H1 (cell line): ENCODE measurements at regions of chr2 and their contacts with region 1.

Region 1: DNA sequence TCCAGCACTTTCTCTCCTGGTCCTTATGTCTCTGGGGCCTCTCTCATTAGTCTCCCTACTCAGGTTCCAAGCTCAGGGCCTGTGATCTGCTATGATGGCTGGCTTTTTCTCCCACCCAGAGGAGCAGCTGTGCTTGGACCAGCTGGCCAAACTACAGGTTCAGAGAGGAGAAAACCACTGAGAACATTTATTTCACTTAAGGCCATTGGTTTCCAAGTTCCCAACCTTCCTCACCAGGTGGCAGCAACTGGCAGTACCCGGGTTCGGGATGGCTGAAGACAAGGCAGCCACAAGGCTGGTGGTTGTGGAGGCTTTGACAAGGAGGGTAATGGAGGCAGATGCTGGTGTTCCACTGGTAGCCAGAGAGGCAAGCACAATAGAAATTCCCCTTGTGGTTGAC is 29.9 kb upstream of the SELENOI start:
- DNase-seq: no peak
- H3K4me3 ChIP-seq: no peak overlapping the region
- H3K27ac ChIP-seq: no peak overlapping the region
- H3K4me1 ChIP-seq: peaks cover 0 to 7% (median 3%) of the 10 kb centered on the region in 4 experiments; a peak in 4 of 7 replicates
- H3K27me3 ChIP-seq: no peaks in the 10 kb centered on the region
- CTCF ChIP-seq: peak in 2 of 3 experiments; percentile 50 to 56; a peak in 3 of 4 replicates
- EP300 ChIP-seq: no peak
- POLR2A ChIP-seq: no peak
- RAD21 ChIP-seq: peak; percentile 50 to 66

Region 2: GRCh38 chr2:26235085-26235484 is 81.0 kb before region 1 on chr2:
- CTCF ChIA-PET with region 1: interaction called, 14 read pairs
- POLR2A ChIA-PET with region 1: no interaction called
- DNase-seq: no peak
- H3K4me3 ChIP-seq: no peak overlapping the region
- H3K27ac ChIP-seq: no peak overlapping the region
- H3K4me1 ChIP-seq: no peaks in the 10 kb centered on the region
- H3K27me3 ChIP-seq: no peaks in the 10 kb centered on the region
- CTCF ChIP-seq: peak in 2 of 3 experiments; percentile 22; a peak in 2 of 4 replicates
- EP300 ChIP-seq: no peak
- POLR2A ChIP-seq: no peak
- RAD21 ChIP-seq: peak; percentile 49 to 51

Region 3: GRCh38 chr2:26276488-26277227 is 39.4 kb before region 1 on chr2:
- CTCF ChIA-PET with region 1: interaction called, 11 read pairs
- POLR2A ChIA-PET with region 1: no interaction called
- DNase-seq: no peak
- H3K4me3 ChIP-seq: no peak overlapping the region
- H3K27ac ChIP-seq: no peak overlapping the region
- H3K4me1 ChIP-seq: no peaks in the 10 kb centered on the region
- H3K27me3 ChIP-seq: peaks cover 0 to 1% (median 0%) of the 10 kb centered on the region in 4 experiments; a peak in 1 of 7 replicates
- CTCF ChIP-seq: no peak
- EP300 ChIP-seq: no peak
- POLR2A ChIP-seq: no peak
- RAD21 ChIP-seq: no peak

Region 4: GRCh38 chr2:26299471-26300101 is 16.5 kb before region 1 on chr2:
- CTCF ChIA-PET with region 1: interaction called, 10 read pairs
- POLR2A ChIA-PET with region 1: interaction called, 35 read pairs
- DNase-seq: peak; percentile 13 to 58
- H3K4me3 ChIP-seq: peak overlapping the region; percentile 47 to 78 (median 70)
- H3K27ac ChIP-seq: peak overlapping the region; percentile 91
- H3K4me1 ChIP-seq: peaks cover 10 to 17% (median 11%) of the 10 kb centered on the region in 4 experiments
- H3K27me3 ChIP-seq: no peaks in the 10 kb centered on the region
- CTCF ChIP-seq: no peak
- EP300 ChIP-seq: peak in 1 of 2 experiments; percentile 68; a peak in 1 of 3 replicates
- POLR2A ChIP-seq: peak in 1 of 2 experiments; percentile 46; a peak in 2 of 3 replicates
- RAD21 ChIP-seq: no peak

Region 5: DNA sequence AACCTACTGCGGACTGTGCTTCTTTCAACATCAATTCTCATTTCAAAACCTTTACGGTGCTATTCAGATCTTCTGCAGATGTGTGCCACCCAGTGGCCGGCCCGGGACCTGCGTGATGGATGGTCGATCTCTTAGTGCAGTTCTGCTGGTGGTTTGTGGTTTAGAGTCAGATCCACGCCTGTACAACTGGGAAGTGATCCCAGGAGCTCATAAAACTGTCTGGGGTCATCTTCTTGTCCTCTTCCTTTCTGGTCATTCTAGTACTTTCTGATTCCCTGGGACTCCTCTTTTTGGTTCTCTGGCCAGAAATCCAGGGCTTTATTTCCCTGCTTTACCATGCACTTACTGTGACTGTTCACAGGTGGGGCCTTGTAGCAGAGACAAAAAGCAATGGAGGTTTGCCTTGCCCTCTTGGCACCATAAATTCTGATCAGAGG is 14.1 kb after region 1 on chr2:
- CTCF ChIA-PET with region 1: interaction called, 24 read pairs
- POLR2A ChIA-PET with region 1: interaction called, 6 read pairs
- DNase-seq: peak in 1 of 2 experiments; percentile 91
- H3K4me3 ChIP-seq: no peak overlapping the region
- H3K27ac ChIP-seq: no peak overlapping the region
- H3K4me1 ChIP-seq: no peaks in the 10 kb centered on the region
- H3K27me3 ChIP-seq: no peaks in the 10 kb centered on the region; a peak in 1 of 7 replicates
- CTCF ChIP-seq: peak; percentile 86 to 87 (median 86)
- EP300 ChIP-seq: no peak
- POLR2A ChIP-seq: no peak
- RAD21 ChIP-seq: peak; percentile 81 to 92

Region 6: GRCh38 chr2:26345545-26346453 is 29.8 kb after region 1 on chr2 and contains the start of gene SELENOI:
- CTCF ChIA-PET with region 1: no interaction called
- POLR2A ChIA-PET with region 1: interaction called, 12 read pairs
- DNase-seq: peak; percentile 97 to 100
- H3K4me3 ChIP-seq: peak within 1 kb of the TSS; percentile 91 to 96 (median 94)
- H3K27ac ChIP-seq: peak within 1 kb of the TSS; percentile 77
- H3K4me1 ChIP-seq: no peaks in the 10 kb centered on the region; a peak in 3 of 7 replicates
- H3K27me3 ChIP-seq: no peaks in the 10 kb centered on the region; a peak in 1 of 7 replicates
- CTCF ChIP-seq: no peak
- EP300 ChIP-seq: peak; percentile 18 to 47; a peak in 1 of 3 replicates
- POLR2A ChIP-seq: peak; percentile 88 to 95
- RAD21 ChIP-seq: no peak
- total RNA-seq, gene SELENOI: 54.8 and 63.8 TPM in 2 replicates

Region 7: GRCh38 chr2:26396734-26397298 is 80.8 kb after region 1 on chr2:
- CTCF ChIA-PET with region 1: no interaction called
- POLR2A ChIA-PET with region 1: no interaction called
- DNase-seq: no peak
- H3K4me3 ChIP-seq: no peak overlapping the region
- H3K27ac ChIP-seq: no peak overlapping the region
- H3K4me1 ChIP-seq: peaks cover 0 to 2% (median 2%) of the 10 kb centered on the region in 4 experiments; a peak in 4 of 7 replicates
- H3K27me3 ChIP-seq: no peaks in the 10 kb centered on the region; a peak in 1 of 7 replicates
- CTCF ChIP-seq: no peak
- EP300 ChIP-seq: no peak
- POLR2A ChIP-seq: no peak
- RAD21 ChIP-seq: no peak